ENCODE measurements at regions of chr12 and their contacts with region 1.

Region 1: DNA sequence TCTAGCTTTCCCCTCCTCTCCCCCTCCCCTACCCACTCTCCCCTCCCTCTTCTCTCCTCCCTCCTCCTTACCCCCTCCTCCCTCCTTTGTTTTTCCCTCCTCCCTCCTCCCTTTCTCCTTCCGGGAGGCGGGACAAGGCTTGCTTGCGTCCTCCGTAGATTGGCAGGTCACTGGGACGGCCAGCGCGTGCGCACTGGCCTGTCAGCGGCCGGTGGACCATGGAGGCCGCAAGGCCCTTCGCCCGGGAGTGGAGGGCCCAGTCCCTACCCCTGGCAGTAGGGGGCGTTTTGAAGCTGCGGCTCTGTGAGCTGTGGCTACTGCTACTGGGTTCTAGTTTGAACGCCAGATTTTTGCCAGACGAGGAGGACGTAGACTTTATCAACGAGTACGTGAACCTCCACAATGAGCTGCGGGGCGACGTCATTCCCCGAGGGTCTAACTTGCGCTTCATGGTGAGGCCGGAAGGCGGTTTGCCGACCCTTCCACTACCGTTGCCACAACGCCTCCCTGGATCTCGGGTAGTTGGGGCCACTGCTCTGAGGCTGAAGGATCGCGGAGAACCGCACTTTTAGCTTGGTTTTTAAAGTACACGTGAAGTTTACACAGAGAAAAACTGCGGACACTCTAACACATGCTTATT is at the start of gene GLIPR1L2:
- DNase-seq: peak; percentile 87
- H3K4me3 ChIP-seq: peak within 1 kb of the TSS; percentile 70 to 72
- H3K27ac ChIP-seq: peak within 1 kb of the TSS; percentile 87 to 94
- H3K4me1 ChIP-seq: peaks cover 0 to 3% of the 10 kb centered on the region in 2 experiments; a peak in 1 of 4 replicates
- H3K27me3 ChIP-seq: no peaks in the 10 kb centered on the region
- CTCF ChIP-seq: peak; percentile 87
- EP300 ChIP-seq: no peak; a peak in 1 of 4 replicates
- RAD21 ChIP-seq: peak; percentile 65
- polyA plus RNA-seq, gene GLIPR1L2: 0.13 and 0.24 TPM in 2 replicates

Region 2: DNA sequence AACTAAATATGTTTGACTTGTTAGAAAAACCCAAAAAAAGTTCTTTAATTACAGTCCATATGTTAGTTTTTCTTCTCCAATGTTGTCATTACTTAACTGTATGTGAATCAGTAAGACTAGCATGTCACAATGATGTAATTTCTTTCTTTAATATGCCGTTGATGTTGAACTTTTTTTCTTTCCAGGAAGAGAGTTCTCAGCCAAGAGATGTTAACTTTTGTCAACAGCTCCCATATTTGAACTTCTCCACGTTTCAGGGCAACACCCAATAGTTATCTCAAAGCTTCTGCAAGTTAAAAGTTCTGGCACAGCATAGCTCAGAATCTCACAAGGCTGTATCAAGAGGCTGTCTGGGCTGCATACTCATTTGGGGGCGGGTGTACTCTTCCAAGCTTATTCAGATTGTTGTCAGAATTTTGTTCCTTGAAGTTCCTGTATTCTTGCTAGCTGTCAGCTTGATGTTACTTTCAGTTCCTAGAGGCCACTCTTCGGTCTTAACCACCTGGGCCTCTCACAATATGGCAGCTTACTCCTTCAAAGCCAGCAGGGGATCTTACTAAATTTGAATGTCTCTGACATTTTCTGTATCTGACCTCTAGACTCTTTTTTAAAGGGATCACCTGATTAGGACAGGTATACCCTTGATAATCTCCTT is 220.4 kb before region 1 on chr12:
- CTCF ChIA-PET with region 1: no interaction called
- POLR2A ChIA-PET with region 1: no interaction called
- DNase-seq: no peak
- H3K4me3 ChIP-seq: no peak overlapping the region
- H3K27ac ChIP-seq: no peak overlapping the region
- H3K4me1 ChIP-seq: no peaks in the 10 kb centered on the region
- H3K27me3 ChIP-seq: no peaks in the 10 kb centered on the region; the same call in 1 of the 2 replicates
- CTCF ChIP-seq: no peak
- EP300 ChIP-seq: no peak
- RAD21 ChIP-seq: no peak

Region 3: GRCh38 chr12:75305412-75306332 is 85.3 kb before region 1 on chr12:
- CTCF ChIA-PET with region 1: no interaction called
- POLR2A ChIA-PET with region 1: no interaction called
- DNase-seq: no peak
- H3K4me3 ChIP-seq: no peak overlapping the region
- H3K27ac ChIP-seq: no peak overlapping the region
- H3K4me1 ChIP-seq: no peaks in the 10 kb centered on the region
- H3K27me3 ChIP-seq: no peaks in the 10 kb centered on the region
- CTCF ChIP-seq: no peak
- EP300 ChIP-seq: no peak
- RAD21 ChIP-seq: no peak

Region 4: GRCh38 chr12:75334384-75335030 is 56.5 kb before region 1 on chr12 and contains the start of gene GLIPR1L1:
- CTCF ChIA-PET with region 1: interaction called, 14 read pairs
- POLR2A ChIA-PET with region 1: interaction called, 4 read pairs
- DNase-seq: peak; percentile 81
- H3K4me3 ChIP-seq: peak within 1 kb of the TSS; percentile 56 to 57
- H3K27ac ChIP-seq: peak within 1 kb of the TSS; percentile 56 to 68
- H3K4me1 ChIP-seq: peaks cover 0 to 6% of the 10 kb centered on the region in 2 experiments; a peak in 2 of 4 replicates
- H3K27me3 ChIP-seq: no peaks in the 10 kb centered on the region
- CTCF ChIP-seq: peak; percentile 83
- EP300 ChIP-seq: peak in 1 of 2 experiments; percentile 25; a peak in 1 of 4 replicates
- RAD21 ChIP-seq: peak; percentile 74
- polyA plus RNA-seq, gene GLIPR1L1: not detected in 2 replicates

Region 5: GRCh38 chr12:75407683-75408082 is 16.7 kb after region 1 on chr12:
- CTCF ChIA-PET with region 1: interaction called, 13 read pairs
- POLR2A ChIA-PET with region 1: no interaction called
- DNase-seq: no peak
- H3K4me3 ChIP-seq: no peak overlapping the region
- H3K27ac ChIP-seq: no peak overlapping the region
- H3K4me1 ChIP-seq: no peaks in the 10 kb centered on the region
- H3K27me3 ChIP-seq: no peaks in the 10 kb centered on the region
- CTCF ChIP-seq: no peak
- EP300 ChIP-seq: no peak
- RAD21 ChIP-seq: no peak

Measured in SK-N-SH (cell line).